ENCODE measurements at regions of chr16 and their contacts with region 1.

Region 1: GRCh38 chr16:46903255-46903905 is 19.2 kb downstream of the GPT2 start:
- DNase-seq: no peak
- ATAC-seq: no peak
- H3K4me3 ChIP-seq: no peak overlapping the region
- H3K4me3 Mint-ChIP-seq: no peak overlapping the region
- H3K27ac ChIP-seq: no peak overlapping the region
- H3K27ac Mint-ChIP-seq: no peak overlapping the region
- H3K4me1 ChIP-seq: no peaks in the 10 kb centered on the region
- H3K4me1 Mint-ChIP-seq: no peaks in the 10 kb centered on the region
- H3K27me3 ChIP-seq: no peaks in the 10 kb centered on the region
- H3K27me3 Mint-ChIP-seq: no peaks in the 10 kb centered on the region
- CTCF ChIP-seq: no peak

Region 2: DNA sequence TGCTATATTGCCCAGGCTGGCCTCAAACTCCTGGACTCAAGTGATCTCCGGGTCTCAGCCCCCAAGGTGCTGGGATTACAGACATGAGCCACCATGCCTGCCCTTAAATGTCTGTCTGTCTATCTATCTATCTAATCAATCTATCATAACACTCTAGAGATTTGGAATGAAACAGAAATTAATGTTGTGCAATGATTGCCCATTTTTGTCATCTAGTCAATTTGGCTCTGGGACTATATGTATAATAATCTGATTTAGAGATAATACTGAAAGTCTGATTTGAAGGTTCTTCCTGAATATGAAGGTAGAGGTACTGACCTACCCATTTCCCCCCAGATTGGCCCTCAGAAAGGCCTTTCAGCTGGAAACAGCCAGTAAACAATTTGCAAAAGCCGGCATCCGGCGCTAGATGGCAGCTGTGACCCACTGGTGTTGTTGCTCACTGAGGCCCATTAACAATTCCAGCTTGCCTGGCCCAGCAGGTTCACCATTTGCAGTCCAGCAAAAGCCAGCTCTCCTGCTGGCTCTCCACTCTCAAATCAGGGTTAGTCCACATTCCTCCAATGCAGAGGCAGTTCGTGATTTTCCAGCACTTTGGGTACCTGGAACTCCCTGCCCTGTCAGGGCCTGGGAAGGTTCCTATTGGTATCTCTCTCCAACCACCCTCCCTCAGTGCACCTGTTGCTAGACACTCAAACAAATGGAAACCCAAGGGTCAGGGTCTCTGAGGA is 49.5 kb before region 1 on chr16:
- CTCF ChIA-PET with region 1: interaction called, 71 read pairs
- POLR2A ChIA-PET with region 1: no interaction called
- intact Hi-C with region 1: no loop called
- DNase-seq: peak; percentile 19 to 71 (median 57)
- ATAC-seq: no peak
- H3K4me3 ChIP-seq: no peak overlapping the region
- H3K4me3 Mint-ChIP-seq: no peak overlapping the region
- H3K27ac ChIP-seq: no peak overlapping the region
- H3K27ac Mint-ChIP-seq: no peak overlapping the region
- H3K4me1 ChIP-seq: no peaks in the 10 kb centered on the region
- H3K4me1 Mint-ChIP-seq: no peaks in the 10 kb centered on the region
- H3K27me3 ChIP-seq: no peaks in the 10 kb centered on the region
- H3K27me3 Mint-ChIP-seq: no peaks in the 10 kb centered on the region
- CTCF ChIP-seq: peak; percentile 50